Ascending aorta (tissue), 2 donors: ENCODE measurements at regions of chr9 and their contacts with region 1.

Region 1: GRCh38 chr9:35277628-35278359 is 116.0 kb downstream of the UNC13B start:
- DNase-seq: no peak
- H3K4me3 ChIP-seq: peak overlapping the region in 1 of 2 donors; percentile 49
- H3K27ac ChIP-seq: peak overlapping the region; percentile 35 to 53
- H3K4me1 ChIP-seq: peaks cover 3 to 9% of the 10 kb centered on the region in 2 donors
- H3K27me3 ChIP-seq: no peaks in the 10 kb centered on the region
- CTCF ChIP-seq: no peak

Region 2: DNA sequence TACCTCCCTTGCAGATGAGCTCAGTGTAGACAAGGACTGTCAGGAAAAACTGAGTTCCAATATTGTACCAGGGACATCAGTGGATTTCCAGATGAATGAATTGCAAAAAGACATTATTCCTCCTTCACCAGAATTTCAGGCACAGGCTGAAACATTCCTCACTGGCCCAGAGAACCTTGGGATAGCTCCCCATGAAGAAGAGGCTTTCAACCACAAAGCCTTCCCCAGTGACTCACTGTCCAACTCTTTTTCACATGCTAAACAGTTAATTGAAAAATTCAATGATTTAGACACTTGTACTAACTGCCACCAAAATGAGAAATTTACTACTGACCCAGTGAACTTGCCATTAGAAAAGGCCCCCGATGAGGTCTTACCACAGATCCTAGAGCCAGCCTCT is 28.5 kb after region 1 on chr9:
- intact Hi-C with region 1: no loop called
- DNase-seq: no peak
- H3K4me3 ChIP-seq: no peak overlapping the region
- H3K27ac ChIP-seq: no peak overlapping the region
- H3K4me1 ChIP-seq: peaks cover 2 to 5% of the 10 kb centered on the region in 2 donors
- H3K27me3 ChIP-seq: no peaks in the 10 kb centered on the region
- CTCF ChIP-seq: no peak

Region 3: GRCh38 chr9:35341585-35341984 is 63.8 kb after region 1 on chr9:
- intact Hi-C with region 1: loop called (anchors 2 kb)
- DNase-seq: peak; percentile 23 to 79
- H3K4me3 ChIP-seq: peak overlapping the region; percentile 17 to 47
- H3K27ac ChIP-seq: peak overlapping the region; percentile 72 to 73
- H3K4me1 ChIP-seq: peaks cover 9 to 25% of the 10 kb centered on the region in 2 donors
- H3K27me3 ChIP-seq: no peaks in the 10 kb centered on the region
- CTCF ChIP-seq: no peak

Region 4: GRCh38 chr9:35470894-35471293 is 193.1 kb after region 1 on chr9:
- intact Hi-C with region 1: loop called (anchors 5 kb)
- DNase-seq: peak in 1 of 2 donors; percentile 87
- H3K4me3 ChIP-seq: peak overlapping the region; percentile 1 to 18
- H3K27ac ChIP-seq: peak overlapping the region; percentile 77 to 81
- H3K4me1 ChIP-seq: peaks cover 2 to 12% of the 10 kb centered on the region in 2 donors
- H3K27me3 ChIP-seq: no peaks in the 10 kb centered on the region
- CTCF ChIP-seq: no peak

Region 5: GRCh38 chr9:35705836-35706430 is 428.1 kb after region 1 on chr9:
- intact Hi-C with region 1: no loop called
- DNase-seq: no peak
- H3K4me3 ChIP-seq: no peak overlapping the region
- H3K27ac ChIP-seq: peak overlapping the region; percentile 61
- H3K4me1 ChIP-seq: no peaks in the 10 kb centered on the region
- H3K27me3 ChIP-seq: no peaks in the 10 kb centered on the region
- CTCF ChIP-seq: no peak